Left cardiac atrium (tissue), 4 donors: ENCODE measurements at regions of chr6 and their contacts with region 1.

Region 1: GRCh38 chr6:29964887-29965562 is 22.7 kb downstream of the HLA-A start:
- DNase-seq: peak; percentile 82
- ATAC-seq: peak; percentile 90 to 91

Region 2: DNA sequence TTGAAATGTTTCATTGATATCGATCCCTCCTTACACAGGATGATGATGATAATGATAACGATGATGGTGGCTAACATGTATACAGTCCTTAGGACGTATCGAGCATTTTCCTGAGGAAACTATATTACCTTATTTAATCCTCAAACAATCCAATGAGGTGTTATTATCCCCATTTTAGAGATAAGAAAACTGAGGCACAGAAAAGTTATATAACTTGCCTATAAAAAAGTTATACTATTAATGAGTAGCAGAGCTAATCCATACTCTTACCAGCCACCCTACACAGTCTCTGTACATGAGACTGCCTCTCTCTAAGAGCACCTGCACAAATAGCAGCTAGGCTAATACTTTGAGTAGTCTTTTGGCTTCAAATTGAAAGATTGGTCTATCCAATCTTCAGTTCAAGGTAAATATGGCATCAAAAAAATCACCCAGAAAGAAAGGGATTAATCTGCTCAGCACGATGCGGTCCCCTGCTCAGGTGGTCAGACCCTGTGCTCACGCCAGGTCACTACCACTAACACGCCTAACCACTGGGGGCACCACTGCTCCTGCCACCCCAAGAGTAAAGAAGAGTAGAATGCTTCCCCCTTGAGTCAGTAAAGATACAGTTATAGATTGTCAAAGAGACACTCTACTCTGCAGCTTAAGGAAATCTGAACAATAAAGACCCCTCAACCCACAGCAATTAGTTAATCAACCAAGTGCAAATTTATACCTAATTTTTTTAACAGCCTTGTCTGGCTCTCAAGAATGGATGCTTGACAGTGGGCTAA is 347.1 kb before region 1 on chr6:
- intact Hi-C with region 1: no loop called
- DNase-seq: no peak
- ATAC-seq: no peak

Region 3: DNA sequence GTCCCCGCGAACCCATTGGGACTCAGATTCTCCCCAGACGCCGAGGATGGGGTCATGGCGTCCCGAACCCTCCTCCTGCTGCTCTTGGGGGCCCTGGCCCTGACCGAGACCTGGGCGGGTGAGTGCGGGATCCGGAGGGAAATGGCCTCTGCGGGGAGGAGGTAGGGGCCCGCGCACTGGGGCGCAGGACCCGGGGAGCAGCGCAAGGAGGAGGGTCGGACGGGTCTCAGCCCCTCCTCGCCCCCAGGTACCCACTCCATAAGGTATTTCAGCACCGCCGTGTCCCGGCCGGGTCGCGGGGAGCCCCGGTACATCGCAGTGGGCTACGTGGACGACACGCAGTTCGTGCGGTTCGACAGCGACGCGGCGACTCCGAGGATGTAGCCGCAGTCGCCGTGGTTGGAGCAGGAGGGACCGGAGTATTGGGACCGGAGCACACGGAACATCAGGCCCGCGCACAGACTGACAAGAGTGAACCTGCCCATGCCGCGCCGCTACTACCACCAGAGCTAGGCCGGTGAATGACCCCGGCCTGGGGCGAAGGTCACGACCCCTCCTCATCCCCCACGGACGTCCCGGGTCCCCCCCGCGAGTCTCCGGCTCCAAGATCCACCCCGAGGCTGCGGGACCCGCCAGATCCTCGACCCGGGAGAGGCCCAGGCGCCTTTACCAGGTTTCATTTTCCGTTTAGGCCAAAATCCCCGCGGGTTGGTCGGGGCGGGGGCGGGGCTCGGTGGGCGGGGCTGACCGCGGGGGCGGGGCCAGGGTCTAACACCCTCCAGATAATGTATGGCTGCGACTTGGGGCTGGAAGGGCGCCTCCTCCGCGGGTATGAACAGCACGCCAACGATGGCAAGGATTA is 38.4 kb before region 1 on chr6:
- intact Hi-C with region 1: loop called in 1 of 2 experiments (anchors 5 kb)
- DNase-seq: peak; percentile 81
- ATAC-seq: peak; percentile 90 to 94

Region 4: DNA sequence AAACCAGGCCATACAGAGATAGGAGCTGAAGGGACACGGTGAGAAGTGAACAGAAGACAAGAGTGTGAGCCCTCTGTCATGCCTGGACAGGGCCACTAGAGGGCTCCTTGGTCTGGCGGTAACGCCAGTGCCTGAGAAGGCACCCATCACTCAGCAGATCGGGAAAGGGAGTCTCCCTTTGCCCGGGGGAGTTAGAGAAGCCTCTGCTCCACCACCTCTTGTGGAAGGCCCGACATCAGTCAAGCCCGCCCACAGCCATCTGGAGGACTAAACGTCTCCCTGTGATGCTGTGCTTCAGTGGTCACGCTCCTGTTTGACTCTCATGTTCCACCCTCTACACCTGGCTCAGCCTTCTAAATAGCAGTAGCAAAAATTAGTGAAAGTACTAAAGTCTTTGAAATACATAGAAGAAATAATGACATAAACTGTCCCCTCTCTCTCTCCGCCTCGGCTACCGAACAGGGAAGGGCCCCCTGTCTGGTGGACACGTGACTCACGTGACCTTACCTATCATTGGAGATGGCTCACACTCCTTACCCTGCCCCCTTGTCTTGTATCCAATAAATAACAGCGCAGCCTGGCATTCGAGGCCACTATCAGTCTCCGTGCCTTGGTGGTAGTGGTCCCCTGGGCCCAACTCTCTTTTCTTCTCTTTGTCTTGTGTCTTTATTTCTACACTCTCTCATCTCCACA is 446.6 kb after region 1 on chr6:
- intact Hi-C with region 1: no loop called
- DNase-seq: peak; percentile 50
- ATAC-seq: peak in 1 of 2 donors; percentile 68

Region 5: GRCh38 chr6:30626484-30627366 is 661.7 kb after region 1 on chr6 and contains the start of gene ATAT1:
- intact Hi-C with region 1: no loop called
- DNase-seq: peak; percentile 92
- ATAC-seq: peak; percentile 97 to 99
- total RNA-seq, gene ATAT1: 2.7 to 3.8 TPM